ENCODE measurements at regions of chr15 and their contacts with region 1.

Region 1: GRCh38 chr15:63522225-63522578 is 17.8 kb downstream of the USP3 start:
- DNase-seq: no peak
- H3K4me3 Mint-ChIP-seq: no peak overlapping the region
- H3K27ac Mint-ChIP-seq: no peak overlapping the region
- H3K4me1 Mint-ChIP-seq: peaks cover 52% of the 10 kb centered on the region
- H3K27me3 Mint-ChIP-seq: no peaks in the 10 kb centered on the region

Region 2: DNA sequence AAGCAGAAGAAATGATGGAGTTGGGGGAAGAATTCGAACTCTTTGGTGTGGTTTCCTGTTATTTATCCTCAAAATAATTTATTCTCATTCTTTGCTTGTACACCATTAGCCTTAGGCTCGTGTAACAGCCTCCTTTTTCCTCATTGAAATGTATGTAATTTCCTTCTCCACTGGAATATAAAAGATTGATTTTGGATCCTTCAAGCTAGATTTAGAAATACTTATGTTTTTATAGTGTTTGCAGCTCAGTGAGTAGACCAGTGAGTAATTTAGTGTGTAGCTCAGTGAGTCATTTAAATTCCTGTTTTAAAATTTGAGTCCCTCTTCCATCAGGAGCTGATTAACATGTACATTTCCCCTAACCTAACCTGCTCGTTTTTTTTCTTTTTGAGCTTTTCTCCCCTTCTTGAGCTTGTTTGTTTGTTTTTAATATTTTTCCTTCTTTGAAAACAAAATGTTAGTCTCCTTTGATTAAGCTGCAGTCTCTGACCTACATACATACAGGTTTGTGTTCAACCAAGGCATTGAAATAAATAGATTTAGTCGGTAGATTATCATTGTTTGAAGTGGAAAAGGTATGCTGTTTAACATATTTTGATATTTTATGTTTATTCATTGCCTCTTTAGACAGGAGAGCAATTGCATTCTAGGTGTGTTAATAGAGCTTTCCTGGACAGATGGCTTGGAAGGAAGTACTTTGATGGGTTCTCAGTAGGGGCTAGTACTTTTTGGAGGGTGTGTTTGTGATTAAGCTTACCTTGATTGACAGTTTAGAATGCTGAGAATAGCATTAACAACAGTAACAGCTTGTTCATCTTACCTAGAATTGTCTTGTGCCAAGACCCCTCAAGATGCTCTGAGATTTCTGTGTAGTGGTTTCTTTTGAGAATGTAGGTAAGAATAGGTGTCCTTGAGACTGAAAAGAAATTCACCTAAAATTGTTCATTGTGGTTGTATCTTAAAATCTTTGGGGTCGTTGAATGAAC is 12.0 kb before region 1 on chr15:
- CTCF ChIA-PET with region 1: interaction called, 15 read pairs
- POLR2A ChIA-PET with region 1: no interaction called
- DNase-seq: no peak
- H3K4me3 Mint-ChIP-seq: peak overlapping the region; percentile 23
- H3K27ac Mint-ChIP-seq: peak overlapping the region; percentile 32
- H3K4me1 Mint-ChIP-seq: peaks cover 82% of the 10 kb centered on the region
- H3K27me3 Mint-ChIP-seq: no peaks in the 10 kb centered on the region

Measured in activated CD4-positive, alpha-beta T cell treated with anti-CD3 and anti-CD28 coated beads, Interleukin-2, amount 10 ng/mL, durations not matched to agents 7 days and 5 days (primary cell).